GM12878 (cell line): ENCODE measurements at regions of chr5 and their contacts with region 1.

Region 1: GRCh38 chr5:131270809-131271208 is 7.0 kb downstream of the CDC42SE2 start:
- DNase-seq: no peak
- ATAC-seq: no peak
- H3K4me3 ChIP-seq: peak overlapping the region; percentile 70
- H3K27ac ChIP-seq: peak overlapping the region; percentile 71
- H3K4me1 ChIP-seq: peaks cover 31% of the 10 kb centered on the region
- H3K27me3 ChIP-seq: no peaks in the 10 kb centered on the region
- CTCF ChIP-seq: no peak
- EP300 ChIP-seq: no peak
- POLR2A ChIP-seq: no peak
- RAD21 ChIP-seq: no peak

Region 2: DNA sequence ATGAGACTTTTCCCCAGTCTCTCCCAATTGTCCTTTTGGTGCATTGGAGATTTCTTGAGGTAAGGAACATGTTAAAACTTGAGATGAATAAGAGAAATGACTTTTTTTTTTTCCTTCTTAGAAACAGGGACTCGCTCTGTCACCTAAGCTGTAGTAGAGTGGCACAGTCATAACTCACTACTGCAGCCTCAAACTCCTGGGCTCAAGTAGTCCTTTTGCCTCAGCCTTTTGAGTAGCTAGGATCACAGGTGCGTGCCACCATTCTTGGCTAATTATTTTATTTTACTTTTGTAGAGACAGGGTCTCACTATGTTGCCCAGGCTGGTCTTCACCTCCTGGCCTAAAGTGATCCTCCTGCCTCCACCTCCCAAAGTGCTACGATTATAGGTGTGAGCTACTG is 18.9 kb after region 1 on chr5:
- CTCF ChIA-PET with region 1: interaction called, 3 read pairs
- POLR2A ChIA-PET with region 1: interaction called, 7 read pairs
- RAD21 ChIA-PET with region 1: interaction called, 22 read pairs
- SMC1A ChIA-PET with region 1: interaction called, 19 read pairs
- in situ Hi-C with region 1: no loop called
- intact Hi-C with region 1: no loop called
- DNase-seq: no peak
- ATAC-seq: peak; percentile 60
- H3K4me3 ChIP-seq: peak overlapping the region; percentile 57; the same call in 1 of the 2 replicates
- H3K27ac ChIP-seq: peak overlapping the region; percentile 82
- H3K4me1 ChIP-seq: peaks cover 33% of the 10 kb centered on the region
- H3K27me3 ChIP-seq: no peaks in the 10 kb centered on the region
- CTCF ChIP-seq: no peak
- EP300 ChIP-seq: no peak
- POLR2A ChIP-seq: no peak
- RAD21 ChIP-seq: no peak

Region 3: DNA sequence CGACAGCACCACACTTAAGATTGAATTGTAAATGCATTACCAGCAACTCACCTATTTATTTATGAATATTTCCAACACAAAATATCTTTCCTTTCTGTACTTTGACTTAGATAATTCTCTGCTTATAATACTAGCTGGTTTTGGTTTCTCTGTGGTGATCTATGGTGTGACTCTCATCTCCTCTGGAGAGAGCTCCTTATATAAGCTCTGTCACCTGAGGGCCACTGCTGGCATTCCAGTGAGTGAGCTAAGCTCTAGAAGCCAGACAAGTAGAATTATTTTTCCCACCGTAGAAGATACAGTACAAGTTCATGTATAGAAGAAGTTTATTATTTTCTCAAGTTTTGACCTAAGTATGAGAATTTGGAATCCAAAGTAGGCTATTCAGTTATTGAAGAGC is 104.5 kb after region 1 on chr5:
- CTCF ChIA-PET with region 1: interaction called, 5 read pairs
- POLR2A ChIA-PET with region 1: interaction called, 28 read pairs
- RAD21 ChIA-PET with region 1: interaction called, 145 read pairs
- SMC1A ChIA-PET with region 1: interaction called, 26 read pairs
- in situ Hi-C with region 1: no loop called
- intact Hi-C with region 1: loop called (anchors 2 kb)
- DNase-seq: no peak
- ATAC-seq: peak; percentile 35
- H3K4me3 ChIP-seq: peak overlapping the region; percentile 37; the same call in 1 of the 2 replicates
- H3K27ac ChIP-seq: peak overlapping the region; percentile 88
- H3K4me1 ChIP-seq: peaks cover 77% of the 10 kb centered on the region
- H3K27me3 ChIP-seq: no peaks in the 10 kb centered on the region
- CTCF ChIP-seq: no peak
- EP300 ChIP-seq: no peak
- POLR2A ChIP-seq: no peak
- RAD21 ChIP-seq: no peak